ENCODE measurements at regions of chr3 and their contacts with region 1.

Region 1: DNA sequence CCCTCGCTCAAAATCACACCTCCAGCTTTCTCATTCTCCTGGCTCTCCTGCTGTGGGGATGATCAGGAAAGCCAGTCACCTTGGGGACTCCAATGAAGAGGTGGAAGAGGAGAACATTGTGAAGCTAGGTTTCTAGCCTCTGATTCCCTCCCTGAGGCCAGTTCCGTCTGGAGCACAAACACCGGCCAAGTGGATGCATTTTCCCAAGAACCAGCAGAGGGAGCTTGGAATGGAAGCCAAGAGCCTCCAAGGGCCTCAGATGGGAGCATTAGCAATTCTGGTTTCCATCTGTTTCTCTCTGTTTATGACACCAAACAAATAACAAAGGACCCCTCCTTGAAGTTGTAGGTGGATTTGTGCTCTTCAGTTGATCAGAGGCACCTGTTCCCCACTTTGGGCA is 40.6 kb upstream of the NMNAT3 start:
- DNase-seq: no peak
- H3K4me3 ChIP-seq: no peak overlapping the region
- H3K27me3 ChIP-seq: no peaks in the 10 kb centered on the region
- CTCF ChIP-seq: peak; percentile 56

Region 2: DNA sequence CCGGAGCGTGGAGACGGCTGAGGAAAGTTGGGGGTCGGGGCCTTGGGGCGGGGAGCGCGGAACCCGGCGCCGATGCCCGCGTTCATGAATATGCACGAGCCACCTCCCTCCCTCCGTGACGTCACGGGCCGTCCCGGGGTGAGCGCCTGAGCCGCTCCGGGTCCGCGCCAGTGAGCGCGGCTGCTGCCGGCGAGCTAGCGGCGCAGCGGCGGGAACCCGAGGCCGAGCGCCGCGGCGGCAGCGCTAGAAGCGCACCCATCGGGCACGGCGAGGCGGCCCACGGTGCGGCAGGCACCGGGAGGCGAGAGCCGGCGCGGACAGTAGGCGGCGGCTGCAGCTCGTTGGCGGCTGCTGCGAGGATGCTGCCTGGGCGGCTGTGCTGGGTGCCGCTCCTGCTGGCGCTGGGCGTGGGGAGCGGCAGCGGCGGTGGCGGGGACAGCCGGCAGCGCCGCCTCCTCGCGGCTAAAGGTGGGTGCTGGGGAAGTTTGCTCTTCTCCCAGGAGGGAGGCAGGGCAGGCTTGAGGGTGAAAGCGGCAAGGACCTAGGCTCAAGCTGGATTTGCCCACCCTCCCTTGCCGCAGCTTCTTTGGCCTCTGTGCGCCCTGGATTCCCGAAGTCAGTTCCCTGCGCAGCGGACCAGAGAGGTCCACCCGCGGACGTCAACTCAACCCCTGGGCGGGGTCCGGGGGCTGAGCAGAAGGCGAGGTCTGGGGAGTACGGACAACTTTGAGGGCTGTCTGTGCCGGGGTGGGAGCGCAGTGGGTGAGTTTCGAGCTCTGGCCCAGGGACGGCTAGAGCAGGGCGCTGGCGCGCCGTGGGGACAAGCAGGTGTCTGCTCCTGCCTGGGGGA is 216.8 kb after region 1 on chr3 and contains the start of gene CLSTN2:
- CTCF ChIA-PET with region 1: interaction called, 19 read pairs
- POLR2A ChIA-PET with region 1: no interaction called
- DNase-seq: no peak
- H3K4me3 ChIP-seq: peak within 1 kb of the TSS; percentile 10
- H3K27me3 ChIP-seq: peaks cover 16% of the 10 kb centered on the region
- CTCF ChIP-seq: no peak
- polyA plus RNA-seq, gene CLSTN2: 1.4 and 1.8 TPM in 2 replicates